Activated naive CD4-positive, alpha-beta T cell treated with anti-CD3 and anti-CD28 coated beads for 36 hours (primary cell): ENCODE measurements at regions of chr1 and their contacts with region 1.

Region 1: GRCh38 chr1:64898107-64898845 is 68.1 kb downstream of the JAK1 start:
- DNase-seq: peak; percentile 68
- H3K4me3 Mint-ChIP-seq: no peak overlapping the region
- H3K27ac Mint-ChIP-seq: no peak overlapping the region
- H3K4me1 Mint-ChIP-seq: peaks cover 92% of the 10 kb centered on the region
- H3K27me3 Mint-ChIP-seq: no peaks in the 10 kb centered on the region

Region 2: GRCh38 chr1:64948905-64949833 is 50.9 kb after region 1 on chr1:
- CTCF ChIA-PET with region 1: no interaction called
- intact Hi-C with region 1: loop called (anchors 1 kb)
- DNase-seq: peak; percentile 83
- H3K4me3 Mint-ChIP-seq: peak overlapping the region; percentile 53
- H3K27ac Mint-ChIP-seq: peak overlapping the region; percentile 94
- H3K4me1 Mint-ChIP-seq: peaks cover 79% of the 10 kb centered on the region
- H3K27me3 Mint-ChIP-seq: no peaks in the 10 kb centered on the region